Activated CD4-positive, alpha-beta memory T cell treated with anti-CD3 and anti-CD28 coated beads, Interleukin-2, amount 10 ng/mL, durations not matched to agents 7 days and 5 days (primary cell): ENCODE measurements at regions of chr16 and their contacts with region 1.

Region 1: GRCh38 chr16:674968-675883 is at the start of gene RHBDL1:
- DNase-seq: no peak
- H3K4me3 Mint-ChIP-seq: no peak within 1 kb of the TSS
- H3K27ac Mint-ChIP-seq: no peak within 1 kb of the TSS
- H3K4me1 Mint-ChIP-seq: peaks cover 20% of the 10 kb centered on the region
- H3K27me3 Mint-ChIP-seq: no peaks in the 10 kb centered on the region
- total RNA-seq, gene RHBDL1: 1.5 TPM

Region 2: DNA sequence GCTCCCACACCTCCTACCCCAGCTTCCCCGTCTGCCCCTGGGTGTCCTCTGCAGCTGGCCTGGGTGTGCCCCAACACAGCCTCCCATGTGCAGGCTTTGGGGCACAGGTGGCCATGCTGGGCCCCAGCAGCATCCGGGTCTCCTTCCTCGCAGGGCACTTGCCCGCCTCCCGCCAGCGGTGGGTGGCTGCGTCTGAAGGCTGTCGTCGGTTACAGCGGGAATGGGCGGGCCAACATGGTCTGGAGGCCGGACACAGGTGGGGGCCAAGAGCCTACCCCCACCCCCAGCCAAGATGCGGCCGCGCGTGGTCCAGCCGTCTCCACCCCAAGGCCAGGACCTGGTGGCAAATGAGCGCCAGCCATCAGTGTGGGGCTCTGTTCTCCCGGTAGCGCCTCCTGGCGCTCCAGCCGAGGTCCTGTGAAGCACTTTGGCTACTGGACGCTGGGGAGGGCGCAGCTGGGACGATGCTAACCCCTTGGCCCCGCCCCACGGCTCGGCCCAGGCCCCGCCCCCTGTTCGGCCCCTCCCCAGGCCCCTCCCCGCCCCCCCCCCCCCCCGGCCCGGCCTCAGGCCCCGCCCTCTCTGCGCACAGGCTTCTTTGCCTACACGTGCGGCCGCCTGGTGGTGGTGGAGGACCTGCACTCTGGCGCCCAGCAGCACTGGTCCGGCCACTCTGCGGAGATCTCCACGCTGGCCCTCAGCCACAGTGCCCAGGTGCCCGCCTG is 14.6 kb before region 1 on chr16:
- CTCF ChIA-PET with region 1: interaction called, 4 read pairs
- POLR2A ChIA-PET with region 1: interaction called, 11 read pairs
- DNase-seq: peak; percentile 68
- H3K4me3 Mint-ChIP-seq: no peak overlapping the region
- H3K27ac Mint-ChIP-seq: no peak overlapping the region
- H3K4me1 Mint-ChIP-seq: peaks cover 2% of the 10 kb centered on the region
- H3K27me3 Mint-ChIP-seq: no peaks in the 10 kb centered on the region